ENCODE measurements at regions of chr6 and their contacts with region 1.

Region 1: GRCh38 chr6:31197559-31198305 is 27.2 kb upstream of the POU5F1 start:
- DNase-seq: peak; percentile 84
- H3K4me3 ChIP-seq: peak overlapping the region; percentile 72
- H3K27ac ChIP-seq: peak overlapping the region; percentile 91
- H3K4me1 ChIP-seq: no peaks in the 10 kb centered on the region
- H3K27me3 ChIP-seq: no peaks in the 10 kb centered on the region
- CTCF ChIP-seq: no peak

Region 2: DNA sequence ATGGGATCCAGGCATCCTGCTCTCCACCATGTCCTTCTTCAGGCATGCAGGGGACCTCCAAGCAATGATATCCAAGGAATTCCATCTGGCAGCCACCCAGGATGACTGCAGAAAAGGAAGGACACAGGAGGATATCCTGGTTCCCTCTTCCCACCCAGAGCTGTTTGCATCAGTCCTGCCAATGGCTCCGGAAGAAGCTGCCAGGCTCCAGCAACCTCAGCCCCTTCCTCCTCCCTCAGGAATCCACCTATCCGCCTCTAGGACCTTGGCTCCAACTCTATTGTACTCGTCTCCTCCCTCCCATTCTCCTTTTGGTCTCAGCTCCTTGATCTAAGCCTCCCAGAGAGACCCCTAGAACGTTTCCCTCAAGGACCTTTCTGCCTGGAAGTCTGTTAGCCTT is 58.1 kb before region 1 on chr6:
- CTCF ChIA-PET with region 1: interaction called, 21 read pairs
- POLR2A ChIA-PET with region 1: no interaction called
- intact Hi-C with region 1: loop called (anchors 1 kb)
- DNase-seq: no peak
- H3K4me3 ChIP-seq: no peak overlapping the region
- H3K27ac ChIP-seq: no peak overlapping the region
- H3K4me1 ChIP-seq: no peaks in the 10 kb centered on the region
- H3K27me3 ChIP-seq: no peaks in the 10 kb centered on the region
- CTCF ChIP-seq: no peak

Region 3: DNA sequence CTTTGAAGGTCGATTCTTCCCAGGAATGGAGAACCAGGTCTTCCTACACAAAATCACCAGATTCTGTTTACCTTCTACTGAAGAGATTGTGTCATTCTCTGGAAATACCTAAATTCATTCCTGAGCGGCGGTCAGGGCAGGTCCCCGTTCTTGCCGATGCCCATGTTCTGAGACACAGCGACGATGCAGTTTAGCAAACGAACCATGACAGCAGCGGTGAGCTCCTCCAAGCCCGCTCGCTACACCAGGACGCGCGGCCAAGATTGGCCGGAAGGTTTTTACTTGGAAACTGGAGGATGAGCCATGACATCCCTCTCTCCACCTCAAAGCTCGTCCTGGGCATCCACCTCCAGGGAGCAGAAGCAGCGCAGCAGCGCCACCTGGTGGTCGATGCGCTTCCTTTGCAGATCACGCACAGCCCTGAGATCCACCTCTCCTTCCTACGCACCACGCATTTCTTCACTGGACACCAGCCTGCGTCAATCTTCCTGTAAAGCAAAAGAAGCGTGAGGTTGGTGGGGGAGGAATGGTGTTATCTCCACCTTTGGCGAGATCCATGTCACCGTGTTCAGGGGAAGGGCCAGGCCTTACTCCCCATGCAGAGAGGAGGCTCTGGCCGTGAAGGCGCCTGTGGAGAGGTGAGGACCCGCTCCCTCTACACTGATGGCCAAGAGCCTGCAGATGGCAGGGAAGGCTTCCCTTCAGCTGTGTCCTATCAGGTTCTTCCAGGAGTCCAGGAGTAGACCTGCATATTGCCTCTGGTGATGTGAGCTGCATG is 169.2 kb after region 1 on chr6:
- CTCF ChIA-PET with region 1: interaction called, 9 read pairs
- POLR2A ChIA-PET with region 1: no interaction called
- intact Hi-C with region 1: loop called (anchors 1 kb)
- DNase-seq: peak; percentile 89
- H3K4me3 ChIP-seq: no peak overlapping the region
- H3K27ac ChIP-seq: no peak overlapping the region
- H3K4me1 ChIP-seq: peaks cover 3% of the 10 kb centered on the region
- H3K27me3 ChIP-seq: peaks cover 79% of the 10 kb centered on the region
- CTCF ChIP-seq: peak; percentile 97

Region 4: DNA sequence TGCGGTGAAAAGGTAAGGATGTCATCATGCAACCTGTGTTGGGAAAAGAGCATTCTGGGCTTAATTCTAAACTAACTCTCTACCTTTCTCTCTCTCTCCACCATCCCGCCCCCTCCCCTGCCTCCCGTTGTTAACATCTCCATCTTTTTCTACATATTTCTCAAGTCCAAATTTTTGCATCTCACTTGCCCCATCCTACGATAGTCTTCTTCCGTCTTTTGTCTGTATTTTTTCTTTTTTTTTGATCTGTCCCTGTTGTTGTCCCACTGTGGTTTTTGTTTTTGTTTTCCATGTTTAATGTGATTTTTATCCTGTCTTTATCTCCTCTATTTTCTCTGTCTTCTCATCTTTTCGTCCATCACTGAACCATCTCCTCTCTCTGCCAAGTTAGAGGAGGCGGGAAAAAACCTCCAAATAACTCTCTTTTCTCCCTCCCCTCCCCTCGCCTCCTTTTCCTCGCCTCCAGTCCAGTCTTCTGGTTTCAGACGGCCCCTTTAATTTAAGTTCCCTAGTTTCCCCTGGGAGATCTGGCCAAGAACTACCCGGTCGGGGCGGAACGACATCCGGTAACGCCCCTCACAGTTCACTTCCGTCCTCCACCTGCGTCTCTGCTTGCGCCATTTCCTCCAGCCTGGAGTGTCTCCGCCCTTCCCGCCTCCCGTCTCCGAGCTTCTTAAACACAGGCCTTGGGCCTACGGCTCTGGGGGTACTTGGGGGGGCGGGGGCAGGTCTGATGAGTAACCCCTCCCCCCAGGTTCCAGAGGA is 349.4 kb after region 1 on chr6 and contains the start of gene NFKBIL1:
- CTCF ChIA-PET with region 1: no interaction called
- POLR2A ChIA-PET with region 1: interaction called, 11 read pairs
- intact Hi-C with region 1: no loop called
- DNase-seq: peak; percentile 99
- H3K4me3 ChIP-seq: peak within 1 kb of the TSS; percentile 47
- H3K27ac ChIP-seq: peak within 1 kb of the TSS; percentile 71
- H3K4me1 ChIP-seq: peaks cover 11% of the 10 kb centered on the region
- H3K27me3 ChIP-seq: no peaks in the 10 kb centered on the region
- CTCF ChIP-seq: no peak
- total RNA-seq, gene NFKBIL1: 15.7 and 17.2 TPM in 2 replicates

Measured in A673 (cell line).